Endothelial cell of umbilical vein (primary cell): ENCODE measurements at regions of chr16 and their contacts with region 1.

Region 1: GRCh38 chr16:77722309-77723107 is at the start of gene NUDT7:
- DNase-seq: peak; percentile 97
- H3K4me3 ChIP-seq: peak within 1 kb of the TSS; percentile 79 to 95 (median 89)
- H3K27ac ChIP-seq: peak within 1 kb of the TSS; percentile 79
- H3K4me1 ChIP-seq: peaks cover 10% of the 10 kb centered on the region
- H3K27me3 ChIP-seq: no peaks in the 10 kb centered on the region
- CTCF ChIP-seq: peak in 1 of 2 donors; percentile 20
- POLR2A ChIP-seq: no peak
- total RNA-seq, gene NUDT7: 5.0 and 6.2 TPM in 2 replicates

Region 2: DNA sequence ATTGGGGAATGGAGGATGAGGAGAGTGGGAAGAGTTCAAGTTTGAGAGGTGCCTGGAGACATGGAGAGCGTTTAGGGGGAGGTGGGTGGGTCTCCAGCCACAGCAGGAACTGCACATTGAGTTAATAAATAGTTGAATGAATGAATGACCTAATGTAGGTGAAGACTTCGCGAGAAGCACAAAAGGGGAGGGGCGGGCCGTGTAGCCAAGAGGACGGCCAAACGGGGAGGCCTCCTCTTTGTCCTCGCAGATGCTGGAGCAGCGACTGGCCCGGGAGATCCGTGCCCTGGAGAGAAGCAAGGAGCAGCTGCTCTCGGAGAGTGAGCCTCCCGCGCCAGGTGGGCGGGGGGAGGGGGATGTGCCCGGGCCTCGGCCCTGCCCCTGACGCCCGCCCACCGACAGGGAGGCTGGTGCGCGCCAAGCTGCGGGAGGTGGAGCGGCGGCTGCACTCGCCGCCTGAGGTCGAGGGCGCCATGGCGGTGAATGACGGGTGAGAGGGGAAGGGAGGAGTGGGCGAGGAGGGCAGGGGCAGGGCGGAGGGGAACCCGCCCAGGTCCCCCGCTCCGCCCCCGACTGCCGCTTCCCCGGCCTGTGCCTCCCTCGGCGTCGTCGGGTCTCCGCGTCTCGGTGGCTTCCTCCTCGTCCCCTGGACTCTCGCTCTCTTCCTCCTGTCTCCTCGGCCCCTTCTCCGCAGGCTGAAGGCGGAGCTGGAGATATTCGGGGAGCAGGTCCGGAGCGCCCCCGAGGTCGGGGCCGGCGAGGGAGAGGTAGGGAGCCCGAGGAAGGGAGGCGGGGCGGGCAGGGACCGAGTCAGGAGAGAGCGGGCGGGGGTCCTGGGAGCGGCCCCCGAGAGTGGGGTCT is 510.4 kb before region 1 on chr16:
- CTCF ChIA-PET with region 1: no interaction called
- POLR2A ChIA-PET with region 1: no interaction called
- dilution Hi-C with region 1: no loop called
- intact Hi-C with region 1: loop called (anchors 1 kb)
- DNase-seq: peak; percentile 48
- H3K4me3 ChIP-seq: peak overlapping the region; percentile 43 to 70 (median 57)
- H3K27ac ChIP-seq: peak overlapping the region; percentile 48
- H3K4me1 ChIP-seq: peaks cover 17% of the 10 kb centered on the region
- H3K27me3 ChIP-seq: no peaks in the 10 kb centered on the region
- CTCF ChIP-seq: no peak
- POLR2A ChIP-seq: no peak

Region 3: GRCh38 chr16:77499373-77500285 is 222.9 kb before region 1 on chr16:
- CTCF ChIA-PET with region 1: no interaction called
- POLR2A ChIA-PET with region 1: no interaction called
- dilution Hi-C with region 1: no loop called
- intact Hi-C with region 1: loop called (anchors 10 kb)
- DNase-seq: peak; percentile 91
- H3K4me3 ChIP-seq: no peak overlapping the region
- H3K27ac ChIP-seq: peak overlapping the region; percentile 21
- H3K4me1 ChIP-seq: peaks cover 23% of the 10 kb centered on the region
- H3K27me3 ChIP-seq: no peaks in the 10 kb centered on the region
- CTCF ChIP-seq: no peak
- POLR2A ChIP-seq: no peak

Region 4: DNA sequence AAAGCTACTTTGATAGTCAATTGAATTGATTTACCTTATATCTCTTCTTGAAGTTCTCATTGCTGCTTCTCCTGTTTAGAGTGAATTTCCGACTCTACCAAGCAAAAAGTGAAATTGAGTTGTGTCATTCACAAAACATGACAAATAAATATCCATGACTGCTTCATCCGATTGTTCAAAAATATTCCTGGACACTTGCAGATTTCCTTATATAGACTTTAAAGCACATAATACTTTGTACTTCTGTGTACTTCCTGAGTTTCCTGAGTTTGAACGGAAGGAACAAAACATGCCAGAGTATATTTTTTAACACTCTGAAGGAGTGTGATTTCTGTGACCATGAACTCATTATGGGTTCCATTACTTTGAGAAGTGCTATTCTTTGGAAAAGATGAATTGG is 45.3 kb after region 1 on chr16:
- CTCF ChIA-PET with region 1: no interaction called
- POLR2A ChIA-PET with region 1: no interaction called
- dilution Hi-C with region 1: no loop called
- intact Hi-C with region 1: loop called (anchors 2 kb)
- DNase-seq: peak; percentile 19
- H3K4me3 ChIP-seq: no peak overlapping the region
- H3K27ac ChIP-seq: no peak overlapping the region
- H3K4me1 ChIP-seq: peaks cover 8% of the 10 kb centered on the region
- H3K27me3 ChIP-seq: no peaks in the 10 kb centered on the region
- CTCF ChIP-seq: no peak
- POLR2A ChIP-seq: no peak

Region 5: GRCh38 chr16:77801817-77802216 is 79.3 kb after region 1 on chr16:
- CTCF ChIA-PET with region 1: interaction called, 12 read pairs
- POLR2A ChIA-PET with region 1: no interaction called
- dilution Hi-C with region 1: no loop called
- intact Hi-C with region 1: no loop called
- DNase-seq: no peak
- H3K4me3 ChIP-seq: no peak overlapping the region
- H3K27ac ChIP-seq: no peak overlapping the region
- H3K4me1 ChIP-seq: no peaks in the 10 kb centered on the region
- H3K27me3 ChIP-seq: peaks cover 2 to 3% of the 10 kb centered on the region in 2 experiments
- CTCF ChIP-seq: no peak
- POLR2A ChIP-seq: no peak

Region 6: GRCh38 chr16:77877712-77878347 is 155.3 kb after region 1 on chr16:
- CTCF ChIA-PET with region 1: no interaction called
- POLR2A ChIA-PET with region 1: no interaction called
- dilution Hi-C with region 1: no loop called
- intact Hi-C with region 1: loop called (anchors 5 kb)
- DNase-seq: peak; percentile 61
- H3K4me3 ChIP-seq: no peak overlapping the region
- H3K27ac ChIP-seq: peak overlapping the region; percentile 67
- H3K4me1 ChIP-seq: peaks cover 9% of the 10 kb centered on the region
- H3K27me3 ChIP-seq: no peaks in the 10 kb centered on the region
- CTCF ChIP-seq: no peak
- POLR2A ChIP-seq: no peak